ENCODE measurements at regions of chr16 and their contacts with region 1.

Region 1: GRCh38 chr16:4328046-4328503 is 12.2 kb downstream of the GLIS2 start:
- DNase-seq: peak; percentile 55 to 94 (median 84)

Region 2: DNA sequence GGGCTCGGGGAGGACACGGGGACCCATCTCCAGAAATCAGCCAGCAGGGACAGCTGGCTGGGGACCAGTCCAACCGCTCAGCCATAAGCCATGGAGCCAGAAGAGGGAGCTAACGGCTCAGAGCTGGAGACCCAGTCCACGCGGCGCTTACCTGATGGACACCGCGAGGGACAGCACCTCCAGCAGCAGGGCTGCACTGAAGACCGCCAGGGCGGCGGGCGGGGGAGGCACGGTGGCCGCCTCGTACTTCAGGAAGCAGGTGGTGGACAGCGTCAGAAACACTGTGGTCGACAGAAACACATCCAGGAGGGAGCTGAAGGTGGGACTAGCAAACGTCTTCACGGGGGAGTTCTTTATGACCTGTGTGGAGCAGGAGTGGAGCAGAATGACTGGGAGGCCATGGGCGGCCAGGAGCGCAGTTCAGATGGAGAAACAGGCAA is 345.0 kb before region 1 on chr16:
- intact Hi-C with region 1: no loop called
- DNase-seq: peak; percentile 16 to 82 (median 58)

Region 3: DNA sequence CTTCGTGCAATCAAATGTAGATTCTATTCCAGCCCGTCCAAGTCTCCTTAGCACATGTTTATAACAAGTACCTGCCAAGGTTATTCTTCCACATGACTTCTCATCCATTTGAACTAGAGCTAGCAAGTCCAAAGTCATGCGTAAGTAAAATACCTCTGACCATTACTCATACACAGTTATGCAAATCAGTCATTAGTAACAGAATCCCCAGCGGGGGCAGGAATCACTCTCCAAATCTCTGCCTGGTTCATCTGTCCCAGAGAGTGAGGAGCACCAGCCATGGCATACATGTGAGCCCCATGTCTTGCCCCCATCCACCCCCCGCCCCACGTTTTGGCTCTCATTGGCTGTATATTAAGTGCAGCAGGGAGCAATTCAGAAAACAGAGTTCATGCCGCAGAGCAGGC is 113.9 kb before region 1 on chr16:
- intact Hi-C with region 1: no loop called
- DNase-seq: peak in 1 of 42 donors; percentile 27

Region 4: GRCh38 chr16:4275861-4276260 is 52.2 kb before region 1 on chr16:
- intact Hi-C with region 1: loop called (anchors 5 kb)
- DNase-seq: no peak

Region 5: DNA sequence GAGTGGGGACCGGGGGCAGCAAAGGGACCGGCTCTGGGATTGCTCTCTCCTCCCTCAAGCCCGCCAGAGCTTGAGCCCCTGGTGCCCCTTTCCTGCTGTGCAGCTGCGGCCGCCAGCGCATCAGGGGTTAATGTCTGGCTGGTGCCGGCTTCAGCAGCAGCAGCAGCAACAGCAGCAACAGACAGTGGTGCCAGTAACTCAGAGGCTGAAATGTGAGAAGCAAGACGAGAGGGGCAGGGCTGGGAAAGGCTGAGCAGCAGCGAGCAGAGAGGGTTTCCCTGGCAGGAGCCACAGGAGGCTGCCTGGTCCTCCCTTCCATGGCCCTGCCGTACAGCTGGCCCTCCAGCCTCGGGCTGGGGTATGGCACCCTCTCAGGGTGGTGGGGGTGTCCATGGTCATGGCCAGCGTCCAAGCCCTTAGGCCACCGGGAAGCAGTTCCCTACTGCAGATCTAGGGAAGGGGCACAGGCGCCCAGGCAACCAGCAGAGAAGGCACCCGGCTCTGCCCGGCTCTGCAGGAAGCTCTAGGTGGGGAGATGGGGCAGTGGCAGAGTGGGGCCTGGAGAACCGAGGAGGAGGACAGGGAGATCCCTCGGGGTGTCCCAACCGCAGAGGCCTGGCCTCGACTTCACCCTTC is 34.1 kb before region 1 on chr16:
- intact Hi-C with region 1: loop called (anchors 5 kb)
- DNase-seq: peak in 15 of 42 donors; percentile 12 to 53 (median 32)

Measured in head of caudate nucleus (tissue), 42 donors.